ENCODE measurements at regions of chr19 and their contacts with region 1.

Region 1: DNA sequence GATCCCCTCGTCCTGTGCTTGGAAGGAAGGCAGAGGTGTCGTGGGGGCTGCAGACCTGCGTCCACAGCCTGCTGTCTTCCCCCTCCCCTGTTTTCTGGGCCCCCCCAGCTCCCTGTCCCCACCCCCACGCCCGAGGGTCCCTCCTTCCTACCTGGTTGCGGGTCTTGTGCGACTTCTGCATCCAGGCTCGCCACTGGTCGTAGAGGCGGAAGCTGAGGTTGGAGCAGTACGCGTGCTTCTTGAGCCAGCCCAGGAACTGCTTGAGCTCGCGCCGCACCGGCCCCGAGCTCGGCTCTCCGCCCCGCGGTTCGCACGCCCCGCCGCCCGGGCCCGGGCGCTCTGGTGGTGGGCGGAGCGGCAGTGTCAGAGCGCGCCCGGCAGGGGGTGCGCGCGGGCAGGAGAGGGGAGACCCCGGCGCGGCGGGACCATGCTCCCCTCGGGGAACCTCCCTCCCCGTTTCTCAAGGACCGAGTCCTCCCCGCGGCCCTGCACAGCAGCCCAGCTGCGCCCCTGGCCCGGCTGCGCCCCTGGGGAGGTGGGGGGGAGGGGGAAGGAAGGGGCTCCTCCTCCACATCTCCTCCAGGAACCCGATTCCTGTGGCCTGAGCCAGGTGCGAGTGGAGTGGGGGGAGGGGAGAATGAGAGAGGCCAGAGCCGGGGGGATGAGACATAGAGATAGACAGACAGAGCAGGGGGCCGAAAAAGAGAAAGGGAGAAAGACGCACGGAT is 5.7 kb downstream of the REX1BD start:
- DNase-seq: peak; percentile 76
- ATAC-seq: peak; percentile 90
- H3K4me3 ChIP-seq: peak overlapping the region; percentile 20
- H3K27ac ChIP-seq: no peak overlapping the region; the same call in 1 of the 2 replicates
- H3K4me1 ChIP-seq: peaks cover 8% of the 10 kb centered on the region
- H3K27me3 ChIP-seq: no peaks in the 10 kb centered on the region; the same call in 1 of the 2 replicates
- CTCF ChIP-seq: peak; percentile 96
- POLR2A ChIP-seq: 0 out of 2 replicates have a peak, but pooled peaks have one; percentile 41
- RAD21 ChIP-seq: peak; percentile 89

Region 2: DNA sequence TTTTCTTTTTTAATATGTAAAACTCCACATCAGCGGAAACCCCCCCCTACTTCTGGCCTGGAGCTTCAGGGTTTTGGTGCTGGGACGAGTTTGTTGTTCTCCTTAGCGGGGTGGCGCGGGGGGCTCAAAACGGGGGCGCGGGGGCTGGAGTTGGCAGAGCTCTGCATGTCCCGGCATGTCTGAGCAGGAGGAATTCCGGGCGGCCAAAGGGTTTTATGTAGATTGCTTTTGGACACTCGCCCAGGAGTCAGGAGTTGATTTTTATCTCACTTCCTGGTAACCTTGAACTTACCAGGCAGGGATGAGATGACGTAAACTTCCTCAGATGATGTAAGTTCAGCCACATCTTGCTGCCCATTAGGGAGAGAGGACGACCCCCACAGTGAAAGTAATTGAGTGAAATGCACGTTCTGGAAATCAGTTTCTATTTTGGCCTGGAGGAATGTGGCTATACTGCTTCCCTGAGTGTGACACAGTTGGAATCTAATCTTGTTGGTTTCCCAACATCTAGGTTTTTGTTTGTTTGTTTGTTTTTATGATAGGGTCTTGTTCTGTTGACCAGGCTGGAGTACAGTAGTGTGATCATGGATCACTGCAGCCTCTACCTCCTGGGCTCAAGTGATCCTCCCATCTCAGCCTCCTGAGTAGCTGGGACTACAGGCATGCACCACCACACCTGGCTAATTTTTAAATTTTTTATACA is 229.3 kb before region 1 on chr19:
- CTCF ChIA-PET with region 1: no interaction called
- POLR2A ChIA-PET with region 1: no interaction called
- dilution Hi-C with region 1: no loop called
- in situ Hi-C with region 1: no loop called
- intact Hi-C with region 1: no loop called
- DNase-seq: peak; percentile 100
- ATAC-seq: peak; percentile 70
- H3K4me3 ChIP-seq: no peak overlapping the region
- H3K27ac ChIP-seq: peak overlapping the region; percentile 96
- H3K4me1 ChIP-seq: peaks cover 10% of the 10 kb centered on the region
- H3K27me3 ChIP-seq: no peaks in the 10 kb centered on the region
- CTCF ChIP-seq: no peak
- POLR2A ChIP-seq: peak; percentile 23; the same call in 1 of the 2 replicates
- RAD21 ChIP-seq: 0 out of 2 replicates have a peak, but pooled peaks have one; percentile 7

Region 3: DNA sequence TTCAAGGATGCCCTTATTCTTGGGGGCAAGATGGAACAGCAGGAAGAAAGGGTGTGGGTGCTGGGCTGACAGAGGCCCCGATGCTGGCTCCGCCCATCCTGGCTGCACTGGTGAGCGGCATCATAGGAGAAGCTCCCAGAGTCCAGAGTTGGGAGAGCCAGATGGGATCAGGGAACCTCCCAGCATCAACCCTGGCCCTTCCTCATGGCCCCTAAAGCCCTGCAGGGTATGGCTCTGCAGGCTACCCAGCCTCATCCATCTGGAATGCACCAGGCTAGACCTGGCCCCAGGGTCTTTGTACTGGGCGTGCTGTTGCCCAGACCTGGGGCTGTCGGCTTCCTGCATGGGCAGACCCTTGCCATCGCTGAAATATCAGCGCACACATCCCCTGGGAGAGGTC is 64.5 kb before region 1 on chr19:
- CTCF ChIA-PET with region 1: no interaction called
- POLR2A ChIA-PET with region 1: no interaction called
- dilution Hi-C with region 1: no loop called
- in situ Hi-C with region 1: no loop called
- intact Hi-C with region 1: no loop called
- DNase-seq: no peak
- ATAC-seq: peak; percentile 72
- H3K4me3 ChIP-seq: no peak overlapping the region
- H3K27ac ChIP-seq: no peak overlapping the region
- H3K4me1 ChIP-seq: no peaks in the 10 kb centered on the region
- H3K27me3 ChIP-seq: no peaks in the 10 kb centered on the region
- CTCF ChIP-seq: no peak
- POLR2A ChIP-seq: no peak
- RAD21 ChIP-seq: no peak

Region 4: DNA sequence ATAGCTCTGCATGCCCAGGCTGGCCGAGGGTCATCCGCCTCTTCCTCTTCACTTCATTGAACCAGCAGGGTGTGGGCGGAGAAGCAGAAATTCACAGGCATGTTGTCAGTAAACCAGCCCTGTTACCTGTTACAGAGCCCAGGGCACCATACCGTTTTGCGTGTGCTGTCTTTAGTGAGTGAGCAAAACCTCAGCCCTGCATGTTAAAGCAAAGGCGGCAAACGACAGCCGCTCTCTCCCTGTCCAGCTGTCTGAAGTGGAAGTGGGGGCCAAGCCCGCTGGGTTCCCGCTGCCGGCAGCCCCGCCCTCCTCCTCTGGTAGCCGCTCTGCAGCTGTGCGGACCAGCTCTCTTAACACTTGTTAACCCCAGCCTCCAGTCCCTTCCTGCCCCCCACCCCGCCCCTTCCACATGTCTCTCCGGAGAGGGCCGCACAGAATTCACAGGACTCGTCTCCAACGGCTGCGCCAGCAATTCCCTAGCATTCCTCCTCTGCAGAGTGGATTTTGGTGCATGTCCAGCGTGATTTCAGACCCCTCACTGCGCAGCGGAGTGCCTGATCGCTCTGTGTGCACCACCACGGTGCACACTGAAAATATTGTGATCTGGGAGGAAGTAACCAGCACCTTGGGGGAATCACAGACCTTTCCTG is 55.2 kb after region 1 on chr19:
- CTCF ChIA-PET with region 1: no interaction called
- POLR2A ChIA-PET with region 1: no interaction called
- dilution Hi-C with region 1: no loop called
- in situ Hi-C with region 1: no loop called
- intact Hi-C with region 1: loop called (anchors 1 kb)
- DNase-seq: peak; percentile 70
- ATAC-seq: peak; percentile 54
- H3K4me3 ChIP-seq: no peak overlapping the region
- H3K27ac ChIP-seq: peak overlapping the region; percentile 71
- H3K4me1 ChIP-seq: peaks cover 37% of the 10 kb centered on the region
- H3K27me3 ChIP-seq: no peaks in the 10 kb centered on the region
- CTCF ChIP-seq: no peak
- POLR2A ChIP-seq: 0 out of 2 replicates have a peak, but pooled peaks have one; percentile 14
- RAD21 ChIP-seq: no peak

Region 5: GRCh38 chr19:18675779-18676178 is 81.5 kb after region 1 on chr19:
- CTCF ChIA-PET with region 1: interaction called, 3 read pairs
- POLR2A ChIA-PET with region 1: no interaction called
- dilution Hi-C with region 1: no loop called
- in situ Hi-C with region 1: no loop called
- intact Hi-C with region 1: loop called (anchors 1 kb)
- DNase-seq: no peak
- ATAC-seq: no peak
- H3K4me3 ChIP-seq: no peak overlapping the region
- H3K27ac ChIP-seq: no peak overlapping the region
- H3K4me1 ChIP-seq: peaks cover 15% of the 10 kb centered on the region
- H3K27me3 ChIP-seq: no peaks in the 10 kb centered on the region
- CTCF ChIP-seq: peak; percentile 52
- POLR2A ChIP-seq: no peak
- RAD21 ChIP-seq: peak; percentile 61

Region 6: DNA sequence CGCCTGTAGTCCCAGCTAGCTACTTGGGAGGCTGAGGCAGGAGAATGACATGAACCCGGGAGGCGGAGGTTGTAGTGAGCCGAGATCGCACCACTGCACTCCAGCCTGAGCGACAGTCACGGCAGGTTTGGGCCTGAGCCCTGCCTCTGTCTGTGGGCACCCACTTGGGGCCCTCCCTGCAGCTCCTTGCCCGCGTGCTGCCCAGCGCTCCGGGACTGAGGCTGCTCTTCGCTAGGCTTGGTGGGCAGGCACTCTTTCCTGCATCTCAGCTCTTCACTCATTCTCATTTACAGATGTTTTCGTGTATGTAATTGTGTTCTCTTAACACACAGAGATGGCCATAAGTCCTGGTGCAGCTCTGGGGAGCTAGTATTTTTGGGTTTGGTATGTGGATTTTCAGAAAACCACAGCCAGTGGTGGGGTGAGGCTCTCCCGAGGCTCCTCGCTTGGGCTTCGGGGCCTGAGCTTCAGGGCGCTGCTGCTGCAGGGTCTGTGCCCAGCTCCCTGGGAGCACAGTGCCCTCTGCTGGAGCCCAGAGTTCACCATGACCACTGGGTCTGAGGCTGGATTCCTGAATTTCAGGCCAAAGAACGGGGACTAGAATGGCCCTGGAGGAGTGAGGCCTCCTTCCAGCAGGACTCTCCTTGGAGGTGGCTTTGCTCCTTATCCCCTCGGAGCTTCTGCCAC is 252.7 kb after region 1 on chr19:
- CTCF ChIA-PET with region 1: interaction called, 12 read pairs
- POLR2A ChIA-PET with region 1: interaction called, 12 read pairs
- dilution Hi-C with region 1: no loop called
- in situ Hi-C with region 1: no loop called
- intact Hi-C with region 1: loop called (anchors 1 kb)
- DNase-seq: peak; percentile 69
- ATAC-seq: peak; percentile 93
- H3K4me3 ChIP-seq: no peak overlapping the region
- H3K27ac ChIP-seq: no peak overlapping the region
- H3K4me1 ChIP-seq: peaks cover 21% of the 10 kb centered on the region
- H3K27me3 ChIP-seq: no peaks in the 10 kb centered on the region
- CTCF ChIP-seq: peak; percentile 92
- POLR2A ChIP-seq: no peak
- RAD21 ChIP-seq: peak; percentile 96

Measured in IMR-90 (cell line).